PC-3 (cell line): ENCODE measurements at regions of chr7 and their contacts with region 1.

Region 1: DNA sequence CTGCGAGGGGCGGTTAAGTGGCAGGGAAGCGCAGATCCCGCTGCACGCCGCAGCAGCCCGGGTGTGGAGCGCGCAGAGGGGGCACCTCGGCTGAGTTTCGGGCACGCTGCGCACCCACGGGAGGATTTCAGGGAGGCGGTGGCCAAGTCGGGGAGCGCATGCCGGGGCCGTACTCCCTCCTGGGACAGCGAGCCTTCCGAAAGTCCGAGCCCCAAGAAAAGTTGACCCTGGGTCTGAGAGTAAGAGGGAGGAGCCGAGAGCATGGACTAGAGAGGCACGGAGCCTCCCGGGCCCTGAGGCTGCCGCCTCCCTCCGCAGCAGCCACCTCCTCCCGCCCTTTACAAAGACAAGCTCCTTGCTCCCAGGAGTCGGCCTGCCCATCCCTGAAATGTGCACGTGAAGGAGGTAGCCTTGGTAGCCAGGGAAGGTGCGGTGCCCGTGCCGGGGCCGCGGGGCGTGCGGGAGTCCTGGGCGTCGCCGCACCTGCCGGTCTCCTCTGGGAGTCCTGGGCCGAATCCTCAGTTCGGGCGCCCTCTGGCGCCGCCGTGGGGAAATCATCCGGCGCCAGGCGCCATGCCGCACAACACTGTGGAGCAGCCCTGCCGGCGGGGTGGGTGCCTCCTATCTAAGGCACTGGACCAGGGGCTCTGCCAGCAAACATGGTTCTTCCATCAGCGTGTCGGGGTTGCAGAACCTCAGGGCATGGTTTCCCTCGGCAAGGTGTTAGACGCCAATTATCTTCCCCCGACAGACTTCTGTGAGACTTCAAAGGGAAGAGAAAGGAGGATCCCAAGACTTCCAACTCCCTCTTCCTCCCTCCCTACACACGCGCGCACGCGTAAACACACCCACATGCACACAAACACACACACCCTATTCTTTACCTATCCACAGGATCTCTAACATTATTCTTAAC is 104.0 kb downstream of the TRIL start:
- DNase-seq: peak; percentile 87
- ATAC-seq: peak; percentile 70
- H3K4me3 ChIP-seq: peak overlapping the region; percentile 75
- H3K27ac ChIP-seq: no peak overlapping the region
- H3K4me1 ChIP-seq: peaks cover 47% of the 10 kb centered on the region
- H3K27me3 ChIP-seq: no peaks in the 10 kb centered on the region
- CTCF ChIP-seq: peak; percentile 83

Region 2: GRCh38 chr7:28192786-28193585 is 661.1 kb before region 1 on chr7:
- CTCF ChIA-PET with region 1: no interaction called
- POLR2A ChIA-PET with region 1: no interaction called
- intact Hi-C with region 1: no loop called
- DNase-seq: no peak
- ATAC-seq: no peak
- H3K4me3 ChIP-seq: no peak overlapping the region
- H3K27ac ChIP-seq: no peak overlapping the region
- H3K4me1 ChIP-seq: no peaks in the 10 kb centered on the region
- H3K27me3 ChIP-seq: peaks cover 10% of the 10 kb centered on the region
- CTCF ChIP-seq: no peak

Region 3: DNA sequence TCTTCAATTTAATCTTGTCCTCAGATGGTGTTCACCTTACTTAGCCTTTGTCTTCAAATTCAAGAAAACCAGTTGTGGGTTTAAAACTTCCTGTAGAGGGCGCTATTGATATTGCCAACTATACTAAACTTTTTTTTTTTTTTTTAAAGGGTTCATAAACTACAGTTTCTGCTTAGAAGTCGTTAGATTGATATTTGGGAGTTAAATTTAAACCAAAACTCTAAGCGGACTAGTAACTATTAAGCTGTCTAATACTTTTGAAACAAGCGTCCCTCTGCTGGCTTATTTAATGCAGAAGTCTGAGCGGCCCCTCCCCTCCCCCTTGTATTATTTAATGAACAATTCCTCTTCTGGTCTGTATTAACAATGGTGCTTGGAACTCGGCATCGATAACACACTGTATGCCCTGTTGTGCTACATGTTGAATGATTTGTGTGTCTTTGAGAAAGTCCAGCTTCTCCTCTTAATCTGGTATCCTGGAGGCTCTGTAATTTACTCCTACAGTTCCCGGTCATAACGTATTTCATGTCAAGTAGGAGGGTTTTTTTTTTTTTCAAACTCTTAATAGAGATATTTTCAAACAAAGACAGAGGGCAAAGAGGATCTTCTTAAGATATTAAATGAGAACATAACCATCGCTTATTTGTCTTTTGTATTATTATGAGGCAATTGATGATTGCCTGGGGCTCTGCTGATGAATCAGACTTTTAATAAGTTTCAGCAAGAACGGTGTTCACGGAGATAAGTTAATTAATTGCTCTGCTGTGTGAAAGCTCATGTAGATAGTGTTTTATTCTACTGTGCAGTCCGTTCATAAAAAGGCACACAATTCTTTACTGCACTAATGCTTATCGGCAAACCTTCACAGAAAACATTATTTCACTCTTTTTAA is 464.3 kb before region 1 on chr7:
- CTCF ChIA-PET with region 1: no interaction called
- POLR2A ChIA-PET with region 1: no interaction called
- intact Hi-C with region 1: loop called (anchors 2 kb)
- DNase-seq: peak; percentile 83
- ATAC-seq: peak; percentile 65
- H3K4me3 ChIP-seq: peak overlapping the region; percentile 65
- H3K27ac ChIP-seq: no peak overlapping the region
- H3K4me1 ChIP-seq: peaks cover 8% of the 10 kb centered on the region
- H3K27me3 ChIP-seq: no peaks in the 10 kb centered on the region
- CTCF ChIP-seq: peak; percentile 91

Region 4: DNA sequence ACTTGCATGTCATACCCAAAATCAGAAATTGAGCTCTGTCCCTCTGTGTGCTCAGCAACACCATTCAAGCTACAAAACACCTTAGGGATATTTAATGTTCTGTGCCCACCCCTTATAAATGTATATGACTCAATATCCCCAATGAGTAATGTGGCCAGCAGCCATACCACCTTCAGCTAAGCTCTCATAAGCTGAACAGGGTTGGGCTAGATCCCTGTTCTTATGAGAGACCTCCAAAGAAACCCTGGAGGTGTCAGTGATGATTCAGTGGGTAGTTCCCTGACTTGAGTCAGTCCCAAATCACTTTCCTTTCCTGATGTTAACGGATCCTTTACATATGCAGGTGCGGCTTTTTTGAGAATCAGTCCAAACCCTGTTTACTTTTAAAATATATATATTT is 187.9 kb before region 1 on chr7:
- CTCF ChIA-PET with region 1: no interaction called
- POLR2A ChIA-PET with region 1: no interaction called
- intact Hi-C with region 1: loop called (anchors 5 kb)
- DNase-seq: peak; percentile 95
- ATAC-seq: peak; percentile 96
- H3K4me3 ChIP-seq: no peak overlapping the region
- H3K27ac ChIP-seq: peak overlapping the region; percentile 76
- H3K4me1 ChIP-seq: peaks cover 28% of the 10 kb centered on the region
- H3K27me3 ChIP-seq: no peaks in the 10 kb centered on the region
- CTCF ChIP-seq: no peak

Region 5: GRCh38 chr7:28726555-28726954 is 127.5 kb before region 1 on chr7:
- CTCF ChIA-PET with region 1: no interaction called
- POLR2A ChIA-PET with region 1: no interaction called
- intact Hi-C with region 1: loop called (anchors 1 kb)
- DNase-seq: no peak
- ATAC-seq: no peak
- H3K4me3 ChIP-seq: no peak overlapping the region
- H3K27ac ChIP-seq: no peak overlapping the region
- H3K4me1 ChIP-seq: peaks cover 49% of the 10 kb centered on the region
- H3K27me3 ChIP-seq: no peaks in the 10 kb centered on the region
- CTCF ChIP-seq: no peak

Region 6: GRCh38 chr7:28748933-28749584 is 105.0 kb before region 1 on chr7:
- CTCF ChIA-PET with region 1: no interaction called
- POLR2A ChIA-PET with region 1: no interaction called
- intact Hi-C with region 1: loop called (anchors 2 kb)
- DNase-seq: peak; percentile 86
- ATAC-seq: peak; percentile 100
- H3K4me3 ChIP-seq: no peak overlapping the region
- H3K27ac ChIP-seq: peak overlapping the region; percentile 44
- H3K4me1 ChIP-seq: peaks cover 13% of the 10 kb centered on the region
- H3K27me3 ChIP-seq: no peaks in the 10 kb centered on the region
- CTCF ChIP-seq: peak; percentile 30

Region 7: DNA sequence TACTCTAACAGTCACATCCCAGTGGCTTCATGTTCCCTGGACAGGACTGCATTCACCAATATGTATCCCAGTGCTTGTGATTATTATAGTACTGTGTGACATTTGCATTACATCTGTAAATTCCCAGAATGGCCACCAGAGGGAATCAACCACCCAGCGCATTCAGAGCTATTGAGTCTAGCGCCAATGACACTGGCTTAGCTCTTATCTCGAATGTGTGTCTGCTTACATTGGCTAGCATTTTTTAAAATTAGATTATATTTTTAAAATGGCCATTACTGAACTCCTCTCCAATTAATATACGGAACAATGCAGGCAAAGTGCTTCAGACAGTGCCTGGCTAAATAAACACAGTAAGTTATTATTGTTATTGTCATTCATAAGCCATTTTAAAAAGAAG is 67.7 kb after region 1 on chr7:
- CTCF ChIA-PET with region 1: interaction called, 5 read pairs
- POLR2A ChIA-PET with region 1: no interaction called
- intact Hi-C with region 1: loop called (anchors 1 kb)
- DNase-seq: peak; percentile 81
- ATAC-seq: peak; percentile 89
- H3K4me3 ChIP-seq: 0 out of 2 replicates have a peak overlapping the region, but pooled peaks have one; percentile 7
- H3K27ac ChIP-seq: no peak overlapping the region
- H3K4me1 ChIP-seq: peaks cover 7% of the 10 kb centered on the region; the same call in 1 of the 2 replicates
- H3K27me3 ChIP-seq: no peaks in the 10 kb centered on the region
- CTCF ChIP-seq: peak; percentile 83